ENCODE measurements at regions of chr6 and their contacts with region 1.

Region 1: DNA sequence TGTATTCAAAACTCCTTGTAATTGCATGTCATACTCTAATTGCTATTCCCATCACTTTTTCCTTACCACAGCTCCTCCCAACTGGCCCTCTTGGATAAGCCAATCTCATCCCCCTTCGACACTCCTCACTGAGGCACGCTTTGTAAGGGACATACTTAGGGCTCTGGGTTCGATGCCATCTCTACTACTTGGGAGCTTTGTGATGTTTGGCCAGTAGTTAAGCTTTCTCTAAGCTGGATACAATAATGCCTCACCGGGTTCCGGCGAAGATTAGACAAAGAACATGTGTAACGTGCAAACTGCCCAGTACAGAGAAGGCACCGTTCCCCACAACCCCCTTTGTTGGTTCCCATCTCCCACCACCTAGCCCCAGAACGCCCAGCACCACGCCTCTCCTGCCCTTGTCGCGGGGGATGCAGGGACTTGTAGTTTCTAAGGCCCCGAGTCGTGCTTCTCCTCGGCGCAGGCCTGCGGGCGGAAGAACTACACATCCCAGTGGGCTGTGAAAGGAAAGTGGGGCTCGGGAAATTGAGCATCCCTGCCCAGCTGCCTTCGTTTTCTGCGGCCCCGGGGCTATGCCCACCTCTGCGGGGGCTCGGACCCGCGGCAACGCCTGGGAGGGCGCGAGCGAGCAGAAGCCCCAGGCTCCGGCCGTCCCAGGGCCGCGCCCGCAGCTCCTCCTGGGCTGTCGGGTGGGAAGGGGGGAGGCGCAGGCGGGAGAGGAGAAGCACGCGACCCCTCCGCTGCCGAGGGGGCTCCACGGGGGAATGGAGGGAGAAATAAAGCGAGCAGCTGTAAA is 1.1 kb upstream of the ZDHHC14 start:
- DNase-seq: peak; percentile 76
- ATAC-seq: peak; percentile 77
- H3K4me3 Mint-ChIP-seq: peak overlapping the region; percentile 87
- H3K27ac Mint-ChIP-seq: peak overlapping the region; percentile 78
- H3K4me1 Mint-ChIP-seq: peaks cover 40% of the 10 kb centered on the region
- H3K27me3 Mint-ChIP-seq: peaks cover 8% of the 10 kb centered on the region
- CTCF ChIP-seq: no peak

Region 2: DNA sequence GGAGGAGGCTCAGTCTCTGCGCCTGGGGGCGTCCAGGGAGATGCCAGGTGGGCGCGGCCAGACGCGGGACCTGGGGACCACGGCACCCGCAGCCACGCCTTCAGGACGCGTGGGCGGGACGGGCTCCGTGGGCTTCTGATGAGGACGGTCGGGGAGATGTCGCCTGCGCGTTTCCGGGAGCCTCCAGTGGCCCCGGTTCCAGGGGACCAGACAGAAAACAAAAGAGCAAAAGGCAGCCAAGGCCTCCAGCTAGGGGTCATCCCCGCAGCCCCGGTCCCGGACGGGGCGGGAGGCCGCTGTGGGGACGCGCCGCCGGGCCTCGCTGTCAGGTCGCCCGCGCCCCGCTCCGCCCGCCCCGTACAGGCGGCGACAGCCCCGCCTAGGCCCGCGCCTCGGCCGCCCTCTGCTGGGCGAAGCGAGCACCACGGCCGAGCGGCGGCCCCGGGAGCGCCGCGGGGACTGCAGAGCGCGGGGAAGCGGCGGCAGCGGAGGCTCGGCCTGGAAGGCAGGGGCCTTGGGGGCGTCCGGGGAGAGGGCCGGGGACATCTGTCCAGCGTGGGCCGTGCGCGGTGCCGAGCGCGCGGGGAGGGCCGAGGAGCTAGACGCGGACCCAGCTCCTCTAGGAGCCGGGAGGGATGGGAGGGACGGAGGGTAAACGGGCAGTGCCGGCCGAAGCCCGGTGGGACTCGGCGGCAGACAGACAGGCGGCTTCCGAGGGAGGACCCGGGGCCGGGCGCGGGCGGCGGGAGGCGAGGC is 105.2 kb before region 1 on chr6:
- CTCF ChIA-PET with region 1: no interaction called
- POLR2A ChIA-PET with region 1: interaction called, 5 read pairs
- intact Hi-C with region 1: loop called (anchors 1 kb)
- DNase-seq: peak; percentile 93
- ATAC-seq: peak; percentile 79
- H3K4me3 Mint-ChIP-seq: peak overlapping the region; percentile 94
- H3K27ac Mint-ChIP-seq: peak overlapping the region; percentile 96
- H3K4me1 Mint-ChIP-seq: peaks cover 9% of the 10 kb centered on the region
- H3K27me3 Mint-ChIP-seq: no peaks in the 10 kb centered on the region
- CTCF ChIP-seq: no peak

Region 3: GRCh38 chr6:157323255-157323965 is 56.4 kb before region 1 on chr6 and contains the start of gene TMEM242:
- CTCF ChIA-PET with region 1: interaction called, 4 read pairs
- POLR2A ChIA-PET with region 1: interaction called, 29 read pairs
- intact Hi-C with region 1: loop called (anchors 1 kb)
- DNase-seq: peak; percentile 90
- ATAC-seq: peak; percentile 94
- H3K4me3 Mint-ChIP-seq: peak within 1 kb of the TSS; percentile 96
- H3K27ac Mint-ChIP-seq: peak within 1 kb of the TSS; percentile 92
- H3K4me1 Mint-ChIP-seq: peaks cover 19% of the 10 kb centered on the region
- H3K27me3 Mint-ChIP-seq: peaks cover 16% of the 10 kb centered on the region
- CTCF ChIP-seq: no peak
- total RNA-seq, gene TMEM242: 16.1 and 17.6 TPM in 2 replicates

Region 4: GRCh38 chr6:157398151-157398550 is 18.3 kb after region 1 on chr6:
- CTCF ChIA-PET with region 1: no interaction called
- POLR2A ChIA-PET with region 1: interaction called, 3 read pairs
- intact Hi-C with region 1: loop called (anchors 2 kb)
- DNase-seq: no peak
- ATAC-seq: no peak
- H3K4me3 Mint-ChIP-seq: no peak overlapping the region
- H3K27ac Mint-ChIP-seq: no peak overlapping the region
- H3K4me1 Mint-ChIP-seq: peaks cover 17% of the 10 kb centered on the region
- H3K27me3 Mint-ChIP-seq: no peaks in the 10 kb centered on the region
- CTCF ChIP-seq: no peak

Region 5: GRCh38 chr6:157597446-157598312 is 217.8 kb after region 1 on chr6:
- CTCF ChIA-PET with region 1: no interaction called
- POLR2A ChIA-PET with region 1: interaction called, 3 read pairs
- intact Hi-C with region 1: loop called (anchors 1 kb)
- DNase-seq: no peak
- ATAC-seq: peak; percentile 70
- H3K4me3 Mint-ChIP-seq: peak overlapping the region; percentile 46
- H3K27ac Mint-ChIP-seq: peak overlapping the region; percentile 71
- H3K4me1 Mint-ChIP-seq: peaks cover 54% of the 10 kb centered on the region
- H3K27me3 Mint-ChIP-seq: no peaks in the 10 kb centered on the region
- CTCF ChIP-seq: no peak

Region 6: GRCh38 chr6:157667211-157668008 is 287.6 kb after region 1 on chr6:
- CTCF ChIA-PET with region 1: no interaction called
- POLR2A ChIA-PET with region 1: no interaction called
- intact Hi-C with region 1: loop called (anchors 2 kb)
- DNase-seq: no peak
- ATAC-seq: peak; percentile 84
- H3K4me3 Mint-ChIP-seq: peak overlapping the region; percentile 48
- H3K27ac Mint-ChIP-seq: peak overlapping the region; percentile 33
- H3K4me1 Mint-ChIP-seq: peaks cover 10% of the 10 kb centered on the region
- H3K27me3 Mint-ChIP-seq: no peaks in the 10 kb centered on the region
- CTCF ChIP-seq: peak; percentile 72

Measured in activated B cell treated with CpG ODN at 0.5 μM for 24 hours (primary cell).